ENCODE measurements at regions of chr19 and their contacts with region 1.

Region 1: DNA sequence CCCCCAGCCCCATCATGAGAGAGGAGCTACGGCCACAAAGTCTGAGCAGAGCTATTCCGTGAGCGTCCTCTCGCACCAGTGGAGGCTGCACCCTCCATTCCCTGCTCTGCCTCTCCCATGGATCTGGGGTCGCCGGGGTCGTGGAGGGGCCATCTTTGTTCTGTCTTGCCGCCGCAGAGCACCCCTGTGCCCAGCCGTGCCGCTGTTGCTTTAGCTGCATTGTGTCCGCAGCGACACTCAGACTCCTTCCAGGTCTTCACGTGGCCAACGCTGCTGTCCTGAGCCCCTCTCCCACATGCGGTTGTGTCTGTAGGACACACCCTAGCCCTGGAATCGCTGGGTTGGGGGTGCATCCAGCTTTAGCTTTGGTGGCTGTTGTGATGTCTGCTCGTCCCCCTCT is 15.8 kb downstream of the YIPF2 start:
- DNase-seq: no peak
- H3K4me3 ChIP-seq: no peak overlapping the region
- H3K27ac ChIP-seq: no peak overlapping the region
- H3K4me1 ChIP-seq: no peaks in the 10 kb centered on the region
- H3K27me3 ChIP-seq: no peaks in the 10 kb centered on the region
- CTCF ChIP-seq: no peak

Region 2: DNA sequence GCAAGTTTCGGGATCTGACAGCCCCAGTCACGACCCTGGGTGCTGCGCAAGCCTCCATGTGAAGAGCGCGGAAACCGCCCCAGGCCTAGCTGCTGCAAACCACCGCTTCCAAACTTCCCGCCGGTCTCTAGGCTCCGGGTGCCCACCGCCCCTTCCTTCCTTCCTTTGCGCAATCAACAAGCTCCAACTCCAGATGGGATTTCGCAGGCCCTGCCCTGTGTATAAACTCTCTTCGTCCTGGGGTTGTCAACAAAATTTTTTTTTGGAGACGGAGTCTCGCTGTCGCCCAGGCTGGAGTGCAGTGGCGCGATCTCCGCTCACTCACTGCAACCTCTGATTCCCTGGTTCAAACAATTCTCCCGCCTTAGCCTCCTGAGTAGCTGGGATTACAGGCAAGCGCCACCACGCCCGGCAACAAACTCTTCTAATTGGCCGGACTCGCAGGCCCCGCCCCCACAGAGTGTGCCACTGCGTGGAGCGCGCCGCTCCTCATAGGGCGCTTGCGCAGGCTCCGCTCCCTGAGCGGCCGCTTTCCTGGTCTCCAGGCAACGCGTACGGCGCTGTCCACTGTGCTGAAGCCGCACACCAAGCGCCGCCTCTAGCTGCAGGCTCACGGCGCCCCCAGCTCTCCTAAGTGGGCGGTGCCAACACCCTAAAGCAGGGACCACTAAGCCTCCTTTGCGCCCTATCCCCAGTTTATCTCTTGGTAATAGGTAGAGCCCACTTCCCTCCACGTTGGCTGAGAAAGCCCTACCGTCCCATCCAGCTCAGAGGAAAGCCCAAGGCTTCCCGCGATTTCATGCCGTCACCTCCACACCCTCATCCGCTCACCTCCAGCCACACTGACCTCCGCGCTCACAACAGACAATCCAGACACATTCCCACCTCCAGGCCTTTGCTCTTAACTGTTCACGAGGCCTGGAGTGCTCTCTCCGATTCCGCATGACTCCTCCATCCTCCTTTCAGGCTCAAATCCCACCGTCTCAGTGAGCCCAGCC is 216.9 kb before region 1 on chr19:
- CTCF ChIA-PET with region 1: no interaction called
- POLR2A ChIA-PET with region 1: no interaction called
- intact Hi-C with region 1: no loop called
- DNase-seq: peak; percentile 99
- H3K4me3 ChIP-seq: peak overlapping the region; percentile 31
- H3K27ac ChIP-seq: peak overlapping the region; percentile 62
- H3K4me1 ChIP-seq: peaks cover 10% of the 10 kb centered on the region
- H3K27me3 ChIP-seq: no peaks in the 10 kb centered on the region
- CTCF ChIP-seq: no peak

Region 3: GRCh38 chr19:10797541-10798256 is 114.9 kb before region 1 on chr19:
- CTCF ChIA-PET with region 1: no interaction called
- POLR2A ChIA-PET with region 1: no interaction called
- intact Hi-C with region 1: no loop called
- DNase-seq: no peak
- H3K4me3 ChIP-seq: no peak overlapping the region
- H3K27ac ChIP-seq: no peak overlapping the region
- H3K4me1 ChIP-seq: no peaks in the 10 kb centered on the region
- H3K27me3 ChIP-seq: no peaks in the 10 kb centered on the region
- CTCF ChIP-seq: no peak

Region 4: GRCh38 chr19:10899151-10899653 is 13.4 kb before region 1 on chr19:
- CTCF ChIA-PET with region 1: no interaction called
- POLR2A ChIA-PET with region 1: interaction called, 10 read pairs
- intact Hi-C with region 1: no loop called
- DNase-seq: no peak
- H3K4me3 ChIP-seq: no peak overlapping the region
- H3K27ac ChIP-seq: no peak overlapping the region
- H3K4me1 ChIP-seq: peaks cover 2% of the 10 kb centered on the region
- H3K27me3 ChIP-seq: no peaks in the 10 kb centered on the region
- CTCF ChIP-seq: no peak